ENCODE measurements at regions of chr7 and their contacts with region 1.

Region 1: DNA sequence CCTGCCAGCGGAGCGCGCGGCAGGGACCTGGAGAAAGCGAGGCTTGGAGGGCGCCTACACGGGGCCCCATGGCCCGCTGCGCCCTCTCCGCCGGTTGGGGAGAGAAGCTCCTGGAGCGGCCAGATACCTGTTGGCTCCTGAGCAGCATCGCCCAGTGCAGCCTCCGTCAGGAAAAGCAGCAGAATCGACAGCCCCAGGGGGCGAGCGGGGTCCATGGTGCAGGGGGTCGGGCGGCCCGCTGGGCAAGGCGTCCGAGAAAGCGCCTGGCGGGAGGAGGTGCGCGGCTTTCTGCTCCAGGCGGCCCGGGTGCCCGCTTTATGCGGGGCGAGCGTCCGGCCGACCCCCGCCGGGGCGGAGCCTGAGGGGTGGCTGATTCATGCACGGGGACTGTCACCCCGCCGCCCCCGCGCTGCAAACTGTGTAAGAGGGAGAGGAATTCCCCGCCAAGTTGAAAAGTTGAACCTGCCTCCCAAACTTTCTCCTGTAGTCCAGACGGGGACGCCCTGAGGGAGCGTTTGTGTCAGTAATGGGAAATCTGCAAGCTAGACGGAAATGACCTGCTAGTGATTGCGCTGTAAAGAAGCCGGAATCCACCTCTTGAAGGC is at the start of gene TFPI2:
- DNase-seq: peak; percentile 70 to 80 (median 76)
- H3K4me3 ChIP-seq: peak within 1 kb of the TSS; percentile 58
- H3K27ac ChIP-seq: peak within 1 kb of the TSS; percentile 75 to 82
- H3K4me1 ChIP-seq: peaks cover 4% of the 10 kb centered on the region
- H3K27me3 ChIP-seq: no peaks in the 10 kb centered on the region
- CTCF ChIP-seq: no peak
- EP300 ChIP-seq: no peak
- POLR2A ChIP-seq: no peak
- total RNA-seq, gene TFPI2: 22.9 to 126 (median 47.2) TPM

Region 2: GRCh38 chr7:93578762-93579161 is 311.8 kb before region 1 on chr7:
- intact Hi-C with region 1: no loop called
- DNase-seq: no peak
- H3K4me3 ChIP-seq: no peak overlapping the region
- H3K27ac ChIP-seq: no peak overlapping the region
- H3K4me1 ChIP-seq: no peaks in the 10 kb centered on the region
- H3K27me3 ChIP-seq: no peaks in the 10 kb centered on the region
- CTCF ChIP-seq: no peak
- EP300 ChIP-seq: no peak
- POLR2A ChIP-seq: no peak

Region 3: DNA sequence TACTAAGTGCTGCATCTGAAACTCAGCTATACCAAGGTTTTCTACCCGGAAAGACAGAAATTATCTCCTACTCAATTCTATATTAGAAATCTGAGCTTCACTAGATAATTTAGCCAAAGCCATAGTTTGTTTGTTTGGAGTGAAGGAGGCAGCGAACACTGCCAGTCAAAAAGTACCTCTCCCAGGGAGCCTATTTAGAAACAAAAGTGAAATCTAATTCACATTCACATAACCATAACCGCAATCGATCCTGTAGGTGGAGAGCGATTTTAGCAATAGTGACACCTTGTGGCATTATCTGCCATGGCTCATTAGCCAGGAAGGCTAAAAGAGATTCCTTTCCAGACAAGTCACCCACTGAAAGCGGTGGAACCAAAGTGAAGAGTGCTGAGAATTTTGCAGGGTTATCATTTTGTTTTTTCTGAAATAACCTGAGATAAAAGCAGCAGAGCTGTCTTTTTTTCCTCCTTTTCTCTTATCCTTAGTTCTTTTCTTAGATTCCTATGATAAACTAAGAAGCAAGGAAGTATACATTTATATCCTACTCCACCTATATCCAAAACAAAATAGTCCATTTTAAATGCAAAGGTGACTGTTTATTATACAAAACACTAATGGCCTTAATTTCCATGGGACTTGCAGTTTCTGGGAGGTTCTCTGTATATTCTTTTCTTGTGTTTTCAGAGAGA is 197.2 kb after region 1 on chr7:
- intact Hi-C with region 1: loop called in 2 of 4 experiments (anchors 5 to 10 kb)
- DNase-seq: peak in 3 of 5 donors; percentile 20 to 52 (median 26)
- H3K4me3 ChIP-seq: no peak overlapping the region
- H3K27ac ChIP-seq: no peak overlapping the region
- H3K4me1 ChIP-seq: peaks cover 3% of the 10 kb centered on the region
- H3K27me3 ChIP-seq: no peaks in the 10 kb centered on the region
- CTCF ChIP-seq: peak; percentile 55 to 77 (median 64)
- EP300 ChIP-seq: no peak
- POLR2A ChIP-seq: no peak

Region 4: GRCh38 chr7:94276795-94277194 is 386.2 kb after region 1 on chr7:
- intact Hi-C with region 1: loop called in 1 of 4 experiments (anchors 10 kb)
- DNase-seq: peak in 2 of 5 donors; percentile 36 to 46
- H3K4me3 ChIP-seq: no peak overlapping the region
- H3K27ac ChIP-seq: no peak overlapping the region
- H3K4me1 ChIP-seq: no peaks in the 10 kb centered on the region
- H3K27me3 ChIP-seq: no peaks in the 10 kb centered on the region
- CTCF ChIP-seq: peak; percentile 19 to 44 (median 29)
- EP300 ChIP-seq: no peak
- POLR2A ChIP-seq: no peak